HCT116 (cell line): ENCODE measurements at regions of chr16 and their contacts with region 1.

Region 1: DNA sequence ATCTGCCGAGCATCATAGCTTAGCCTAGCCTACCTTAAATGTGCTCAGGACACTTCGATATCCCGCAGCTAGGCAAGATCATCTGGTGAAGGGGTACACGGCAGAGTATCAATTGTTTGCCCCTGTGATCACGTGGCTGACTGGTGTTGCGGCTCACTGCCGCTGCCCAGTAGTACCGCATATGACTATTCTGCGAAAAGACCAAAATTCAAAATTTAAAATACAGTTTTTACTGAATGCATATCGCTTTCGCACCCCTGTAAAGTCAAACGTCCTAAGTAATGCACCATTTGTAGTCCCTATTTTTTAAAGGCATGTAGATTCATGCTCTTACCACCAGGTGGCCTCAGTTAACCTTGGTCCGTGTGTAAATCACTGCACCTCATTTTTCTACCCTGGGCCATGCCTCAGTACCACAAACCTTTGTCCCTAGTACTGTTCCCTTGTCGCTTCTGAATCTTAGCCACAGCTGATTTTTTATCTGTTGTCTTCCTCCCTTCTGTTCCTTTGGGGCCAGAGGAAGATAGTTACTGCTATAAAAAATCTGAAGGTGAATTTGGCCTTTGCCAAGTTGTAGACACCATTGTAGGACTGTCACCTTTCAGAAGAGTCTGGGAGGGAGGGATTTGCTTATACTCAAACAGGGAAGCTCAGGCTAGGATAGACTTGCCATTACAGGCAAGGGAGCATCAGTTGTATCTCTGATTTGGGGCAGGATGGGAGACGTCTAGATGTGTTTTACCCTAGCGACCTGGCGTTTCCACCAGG is 34.4 kb downstream of the WWP2 start:
- DNase-seq: peak; percentile 45
- ATAC-seq: peak; percentile 90
- H3K4me3 ChIP-seq: no peak overlapping the region
- H3K27ac ChIP-seq: no peak overlapping the region
- H3K4me1 ChIP-seq: no peaks in the 10 kb centered on the region
- H3K27me3 ChIP-seq: no peaks in the 10 kb centered on the region
- CTCF ChIP-seq: peak; percentile 77 to 86 (median 80)
- POLR2A ChIP-seq: no peak
- RAD21 ChIP-seq: peak; percentile 84

Region 2: GRCh38 chr16:69553332-69553731 is 243.2 kb before region 1 on chr16:
- CTCF ChIA-PET with region 1: no interaction called
- POLR2A ChIA-PET with region 1: no interaction called
- RAD21 ChIA-PET with region 1: no interaction called
- intact Hi-C with region 1: no loop called
- DNase-seq: no peak
- ATAC-seq: no peak
- H3K4me3 ChIP-seq: no peak overlapping the region
- H3K27ac ChIP-seq: no peak overlapping the region
- H3K4me1 ChIP-seq: no peaks in the 10 kb centered on the region
- H3K27me3 ChIP-seq: no peaks in the 10 kb centered on the region
- CTCF ChIP-seq: no peak
- POLR2A ChIP-seq: no peak
- RAD21 ChIP-seq: no peak

Region 3: GRCh38 chr16:69644790-69645189 is 151.7 kb before region 1 on chr16:
- CTCF ChIA-PET with region 1: no interaction called
- POLR2A ChIA-PET with region 1: no interaction called
- RAD21 ChIA-PET with region 1: no interaction called
- intact Hi-C with region 1: no loop called
- DNase-seq: no peak
- ATAC-seq: no peak
- H3K4me3 ChIP-seq: no peak overlapping the region
- H3K27ac ChIP-seq: no peak overlapping the region
- H3K4me1 ChIP-seq: 0 out of 4 replicates have a peak, but pooled peaks cover 0 to 3% of the 10 kb centered on the region in 2 experiments
- H3K27me3 ChIP-seq: no peaks in the 10 kb centered on the region
- CTCF ChIP-seq: no peak
- POLR2A ChIP-seq: no peak
- RAD21 ChIP-seq: no peak

Region 4: GRCh38 chr16:69859105-69859989 is 62.8 kb after region 1 on chr16:
- CTCF ChIA-PET with region 1: interaction called, 3 read pairs
- POLR2A ChIA-PET with region 1: no interaction called
- RAD21 ChIA-PET with region 1: no interaction called
- intact Hi-C with region 1: loop called (anchors 2 kb)
- DNase-seq: peak; percentile 33
- ATAC-seq: peak; percentile 92
- H3K4me3 ChIP-seq: no peak overlapping the region
- H3K27ac ChIP-seq: no peak overlapping the region
- H3K4me1 ChIP-seq: peaks cover 0 to 8% of the 10 kb centered on the region in 2 experiments; a peak in 1 of 4 replicates
- H3K27me3 ChIP-seq: no peaks in the 10 kb centered on the region
- CTCF ChIP-seq: peak in 2 of 3 experiments; percentile 44 to 53; a peak in 5 of 6 replicates
- POLR2A ChIP-seq: no peak
- RAD21 ChIP-seq: peak; percentile 50

Region 5: GRCh38 chr16:69930117-69930776 is 133.7 kb after region 1 on chr16:
- CTCF ChIA-PET with region 1: interaction called, 15 read pairs
- POLR2A ChIA-PET with region 1: no interaction called
- RAD21 ChIA-PET with region 1: no interaction called
- intact Hi-C with region 1: loop called (anchors 1 kb)
- DNase-seq: peak; percentile 40
- ATAC-seq: peak; percentile 96
- H3K4me3 ChIP-seq: no peak overlapping the region
- H3K27ac ChIP-seq: no peak overlapping the region
- H3K4me1 ChIP-seq: no peaks in the 10 kb centered on the region
- H3K27me3 ChIP-seq: no peaks in the 10 kb centered on the region
- CTCF ChIP-seq: peak; percentile 64 to 76 (median 69)
- POLR2A ChIP-seq: no peak
- RAD21 ChIP-seq: peak; percentile 78